Caco-2 (cell line): ENCODE measurements at regions of chr10 and their contacts with region 1.

Region 1: DNA sequence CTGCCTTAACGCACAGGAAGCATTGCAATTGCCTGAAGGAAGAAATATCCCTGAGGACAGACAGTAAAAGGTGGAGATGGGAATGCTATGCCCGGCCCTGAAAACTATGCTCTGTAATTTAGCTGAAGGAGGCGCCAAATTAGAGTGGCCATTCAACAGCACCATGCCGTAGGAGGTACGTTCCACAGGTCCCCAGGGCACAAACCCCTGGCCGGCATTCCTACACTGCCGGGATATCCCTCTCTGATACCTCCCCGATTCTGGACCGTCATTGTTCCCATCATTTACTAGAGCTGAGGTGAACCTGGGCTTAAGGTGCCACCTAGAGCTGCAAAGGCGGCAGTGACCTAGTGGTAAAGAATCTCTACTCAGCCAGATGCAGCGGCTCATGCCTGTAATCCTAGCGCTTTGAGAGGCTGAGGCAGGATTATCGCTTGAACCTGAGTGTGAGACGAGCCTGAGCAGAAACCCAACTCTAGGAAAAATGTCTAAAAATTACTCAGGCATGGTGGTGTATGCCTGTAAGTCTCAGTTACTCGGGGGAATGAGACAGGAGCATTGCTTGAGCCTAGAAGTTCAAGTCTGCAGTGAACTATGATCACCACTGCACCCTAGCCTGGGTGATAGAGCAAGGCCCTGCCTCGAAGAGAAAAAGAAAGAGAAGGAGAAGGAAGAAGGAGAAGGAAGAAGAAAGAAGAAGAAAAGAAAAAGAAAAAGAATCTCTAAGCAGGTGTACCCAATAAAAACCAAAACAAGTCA is 53.0 kb upstream of the TNKS2 start:
- DNase-seq: peak; percentile 42 to 55
- H3K4me3 ChIP-seq: no peak overlapping the region
- H3K4me3 Mint-ChIP-seq: no peak overlapping the region
- H3K27ac Mint-ChIP-seq: no peak overlapping the region
- H3K4me1 ChIP-seq: peaks cover 7% of the 10 kb centered on the region; the same call in 1 of the 2 replicates
- H3K4me1 Mint-ChIP-seq: peaks cover 5% of the 10 kb centered on the region
- H3K27me3 ChIP-seq: no peaks in the 10 kb centered on the region
- H3K27me3 Mint-ChIP-seq: peaks cover 9% of the 10 kb centered on the region
- CTCF ChIP-seq: peak; percentile 29 to 54

Region 2: DNA sequence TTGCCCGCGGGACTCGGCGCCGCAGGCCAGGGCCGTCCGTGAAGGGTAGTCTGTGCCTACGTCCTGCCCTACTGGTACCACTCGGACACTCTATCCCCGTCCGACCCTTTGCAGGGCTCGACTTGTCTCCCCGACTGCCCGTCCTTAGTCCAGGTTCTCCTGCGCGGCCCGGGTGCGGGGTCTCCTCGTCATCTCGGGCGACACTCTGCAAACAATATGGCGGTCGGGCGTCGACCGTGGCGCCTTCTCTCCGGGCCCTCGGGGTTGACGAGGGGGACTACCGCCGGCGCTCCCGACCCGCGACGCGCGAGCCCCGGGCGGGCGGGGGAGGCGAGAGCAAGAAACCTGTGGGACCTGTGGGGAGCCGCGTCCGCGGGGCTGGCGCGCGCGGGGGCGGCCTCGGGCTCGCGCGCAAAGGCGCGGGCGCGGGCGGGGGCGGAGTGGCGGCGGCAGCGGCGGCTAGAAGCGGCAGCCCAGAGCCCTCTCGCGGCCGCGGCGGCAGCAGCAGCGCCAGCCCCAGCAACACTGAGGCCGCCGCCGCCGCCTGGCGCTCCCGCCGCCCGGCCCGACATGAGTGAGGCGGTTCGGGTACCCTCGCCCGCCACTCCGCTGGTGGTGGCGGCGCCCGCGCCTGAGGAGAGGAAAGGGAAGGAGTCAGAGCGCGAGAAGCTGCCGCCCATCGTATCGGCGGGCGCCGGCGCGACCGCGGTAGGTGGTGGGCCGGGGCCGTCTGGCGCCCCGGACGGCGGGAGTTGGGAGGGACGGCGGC is 335.2 kb before region 1 on chr10 and contains the start of gene HECTD2:
- CTCF ChIA-PET with region 1: no interaction called
- POLR2A ChIA-PET with region 1: no interaction called
- intact Hi-C with region 1: loop called (anchors 10 kb)
- DNase-seq: peak; percentile 75 to 87
- H3K4me3 ChIP-seq: peak within 1 kb of the TSS; percentile 98
- H3K4me3 Mint-ChIP-seq: peak within 1 kb of the TSS; percentile 86
- H3K27ac Mint-ChIP-seq: peak within 1 kb of the TSS; percentile 93
- H3K4me1 ChIP-seq: no peaks in the 10 kb centered on the region
- H3K4me1 Mint-ChIP-seq: no peaks in the 10 kb centered on the region
- H3K27me3 ChIP-seq: no peaks in the 10 kb centered on the region
- H3K27me3 Mint-ChIP-seq: peaks cover 13% of the 10 kb centered on the region
- CTCF ChIP-seq: peak; percentile 12 to 16
- total RNA-seq, gene HECTD2: 1.5 and 2.0 TPM in 2 replicates

Region 3: DNA sequence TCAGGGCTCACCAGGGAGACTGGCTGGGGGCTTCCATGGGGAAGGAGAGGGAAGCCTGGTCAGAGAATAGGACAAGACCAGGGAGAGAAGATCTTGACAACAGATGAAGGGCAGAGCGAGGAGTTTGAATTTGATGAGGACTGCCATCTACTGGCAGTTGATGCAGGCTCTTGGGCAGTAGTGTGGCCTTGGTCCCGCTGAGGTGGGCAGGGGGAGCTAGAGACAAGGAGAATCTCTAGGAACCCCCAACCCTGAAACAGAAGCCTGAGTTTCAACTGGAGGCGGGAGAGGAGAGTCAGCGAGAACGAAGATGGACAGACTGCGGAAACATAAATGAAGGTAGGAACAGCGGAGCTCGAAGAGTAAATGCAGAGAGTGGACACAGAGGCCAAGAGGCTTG is 193.4 kb before region 1 on chr10:
- CTCF ChIA-PET with region 1: no interaction called
- POLR2A ChIA-PET with region 1: no interaction called
- intact Hi-C with region 1: loop called (anchors 10 kb)
- DNase-seq: peak in 1 of 2 experiments; percentile 44
- H3K4me3 ChIP-seq: no peak overlapping the region
- H3K4me3 Mint-ChIP-seq: no peak overlapping the region
- H3K27ac Mint-ChIP-seq: no peak overlapping the region
- H3K4me1 ChIP-seq: peaks cover 7% of the 10 kb centered on the region
- H3K4me1 Mint-ChIP-seq: peaks cover 13% of the 10 kb centered on the region
- H3K27me3 ChIP-seq: no peaks in the 10 kb centered on the region
- H3K27me3 Mint-ChIP-seq: peaks cover 3% of the 10 kb centered on the region
- CTCF ChIP-seq: peak in 1 of 2 experiments; percentile 77

Region 4: GRCh38 chr10:91643700-91644099 is 101.6 kb before region 1 on chr10:
- CTCF ChIA-PET with region 1: interaction called, 12 read pairs
- POLR2A ChIA-PET with region 1: no interaction called
- intact Hi-C with region 1: loop called (anchors 1 kb)
- DNase-seq: peak in 1 of 2 experiments; percentile 19
- H3K4me3 ChIP-seq: no peak overlapping the region
- H3K4me3 Mint-ChIP-seq: no peak overlapping the region
- H3K27ac Mint-ChIP-seq: no peak overlapping the region
- H3K4me1 ChIP-seq: no peaks in the 10 kb centered on the region
- H3K4me1 Mint-ChIP-seq: no peaks in the 10 kb centered on the region
- H3K27me3 ChIP-seq: no peaks in the 10 kb centered on the region; the same call in 1 of the 2 replicates
- H3K27me3 Mint-ChIP-seq: peaks cover 17% of the 10 kb centered on the region
- CTCF ChIP-seq: peak in 1 of 2 experiments; percentile 44